Heart right ventricle (tissue), 16 donors: ENCODE measurements at regions of chr12 and their contacts with region 1.

Region 1: DNA sequence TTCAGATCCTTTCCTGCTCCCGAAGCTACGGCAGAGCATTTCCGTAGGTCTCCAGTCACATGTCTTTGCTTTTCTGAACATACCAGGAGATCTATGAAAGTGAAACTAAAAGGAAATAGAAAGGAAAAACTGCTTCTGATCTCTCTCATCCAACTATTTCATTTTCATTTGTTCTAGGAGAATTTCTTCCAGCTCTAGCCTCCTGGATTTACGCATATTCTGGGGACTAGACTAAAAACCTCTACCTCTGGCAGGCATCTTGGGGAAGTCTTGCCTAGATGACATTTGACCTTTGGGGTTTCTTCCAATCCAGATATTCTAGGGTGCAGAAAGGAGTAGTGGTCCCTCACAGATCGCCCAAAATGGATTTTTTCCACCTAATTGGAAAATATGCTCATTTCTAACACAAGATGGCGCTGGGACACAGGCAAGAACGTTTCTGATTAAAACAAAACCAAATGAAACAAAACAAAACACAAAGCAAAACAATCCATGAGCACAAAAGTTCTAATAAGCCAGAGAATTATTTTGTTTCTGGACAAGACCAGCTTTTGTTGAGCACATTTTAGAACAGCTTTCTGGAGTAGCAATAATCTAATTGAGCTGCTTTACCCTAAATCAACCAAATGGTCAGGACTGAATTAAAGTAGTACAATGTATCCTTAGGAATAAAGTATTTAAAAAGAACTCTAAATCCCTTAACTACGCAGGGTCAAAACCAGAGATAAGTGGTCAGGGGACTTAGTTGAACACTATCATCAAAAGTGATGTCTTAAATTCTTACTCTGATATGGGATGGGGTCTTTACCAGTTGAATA is 12.3 kb upstream of the PARP11 start:
- DNase-seq: peak in 1 of 2 donors; percentile 35
- ATAC-seq: peak in 6 of 8 donors; percentile 37 to 62 (median 52)
- H3K4me3 ChIP-seq: peak overlapping the region in 9 of 10 donors; percentile 20 to 49 (median 37)
- H3K27ac ChIP-seq: peak overlapping the region in 9 of 10 donors; percentile 39 to 81 (median 63)
- H3K4me1 ChIP-seq: peaks cover 0 to 13% (median 0%) of the 10 kb centered on the region in 9 donors
- H3K27me3 ChIP-seq: peaks cover 0 to 12% (median 10%) of the 10 kb centered on the region in 7 donors
- CTCF ChIP-seq: peak; percentile 69 to 86 (median 78)

Region 2: DNA sequence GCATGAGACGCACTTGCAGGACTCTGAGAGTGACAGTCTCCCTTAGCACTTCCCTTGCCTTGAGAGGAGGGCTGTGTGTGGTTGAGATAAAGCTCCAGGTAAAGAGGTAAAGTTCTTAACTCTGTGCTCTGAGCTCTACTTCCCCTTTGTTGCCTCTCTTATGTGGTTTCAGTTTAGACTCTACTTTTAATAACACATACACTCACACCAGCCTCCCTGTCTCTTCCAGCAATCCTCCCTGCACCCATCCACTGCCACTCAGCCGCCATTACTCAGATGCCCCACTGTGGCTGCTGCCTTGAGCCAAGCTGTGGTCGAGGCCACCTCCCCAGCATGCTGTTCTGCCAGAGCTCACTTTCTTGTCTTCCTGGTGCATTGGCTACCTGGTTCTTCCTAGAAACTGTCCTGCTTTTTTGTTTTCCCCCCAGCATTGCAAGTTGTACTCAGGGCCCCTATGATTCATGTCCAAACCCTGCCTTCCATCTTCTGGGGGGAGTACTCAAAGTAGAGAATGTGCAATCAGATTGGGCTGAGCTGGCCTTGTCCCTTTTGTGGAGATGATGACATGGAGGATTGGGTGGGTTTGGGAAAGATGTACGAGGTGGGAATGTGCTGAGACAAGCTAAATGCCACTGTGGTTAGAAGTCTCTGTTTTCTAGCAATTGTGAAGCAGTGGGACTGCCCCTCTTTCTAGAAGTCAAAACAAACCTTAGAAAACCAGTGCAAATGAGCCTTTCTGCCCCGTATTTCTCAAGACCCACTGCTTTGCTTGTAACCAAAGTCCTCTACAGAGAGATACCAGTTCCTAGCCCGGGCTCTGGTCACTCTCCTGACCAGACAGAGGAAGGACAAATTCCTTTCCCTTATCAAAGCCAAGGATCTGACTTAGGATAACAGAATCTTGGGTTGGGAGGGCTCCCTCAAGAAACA is 103.3 kb after region 1 on chr12:
- intact Hi-C with region 1: loop called in 2 of 10 experiments (anchors 10 kb)
- DNase-seq: no peak
- ATAC-seq: no peak
- H3K4me3 ChIP-seq: no peak overlapping the region
- H3K27ac ChIP-seq: peak overlapping the region in 1 of 10 donors; percentile 2
- H3K4me1 ChIP-seq: no peaks in the 10 kb centered on the region
- H3K27me3 ChIP-seq: peaks cover 0 to 36% (median 20%) of the 10 kb centered on the region in 7 donors
- CTCF ChIP-seq: no peak

Region 3: GRCh38 chr12:4030929-4031702 is 145.6 kb after region 1 on chr12:
- intact Hi-C with region 1: loop called in 6 of 10 experiments (anchors 2 to 10 kb)
- DNase-seq: peak; percentile 84
- ATAC-seq: peak; percentile 96 to 99 (median 98)
- H3K4me3 ChIP-seq: peak overlapping the region in 9 of 10 donors; percentile 38 to 71 (median 59)
- H3K27ac ChIP-seq: peak overlapping the region in 8 of 10 donors; percentile 22 to 82 (median 78)
- H3K4me1 ChIP-seq: peaks cover 0 to 24% (median 12%) of the 10 kb centered on the region in 9 donors
- H3K27me3 ChIP-seq: peaks cover 0 to 11% (median 0%) of the 10 kb centered on the region in 7 donors
- CTCF ChIP-seq: peak in 3 of 9 donors; percentile 8 to 34 (median 14)

Region 4: GRCh38 chr12:4044736-4045730 is 159.5 kb after region 1 on chr12:
- intact Hi-C with region 1: loop called in 1 of 10 experiments (anchors 10 kb)
- DNase-seq: peak in 1 of 2 donors; percentile 24
- ATAC-seq: peak in 3 of 8 donors; percentile 35 to 67 (median 55)
- H3K4me3 ChIP-seq: no peak overlapping the region
- H3K27ac ChIP-seq: no peak overlapping the region
- H3K4me1 ChIP-seq: no peaks in the 10 kb centered on the region
- H3K27me3 ChIP-seq: peaks cover 0 to 24% (median 15%) of the 10 kb centered on the region in 7 donors
- CTCF ChIP-seq: no peak

Region 5: GRCh38 chr12:4187916-4188315 is 302.4 kb after region 1 on chr12:
- intact Hi-C with region 1: no loop called
- DNase-seq: no peak
- ATAC-seq: no peak
- H3K4me3 ChIP-seq: no peak overlapping the region
- H3K27ac ChIP-seq: no peak overlapping the region
- H3K4me1 ChIP-seq: no peaks in the 10 kb centered on the region
- H3K27me3 ChIP-seq: peaks cover 0 to 10% (median 0%) of the 10 kb centered on the region in 7 donors
- CTCF ChIP-seq: no peak

Region 6: DNA sequence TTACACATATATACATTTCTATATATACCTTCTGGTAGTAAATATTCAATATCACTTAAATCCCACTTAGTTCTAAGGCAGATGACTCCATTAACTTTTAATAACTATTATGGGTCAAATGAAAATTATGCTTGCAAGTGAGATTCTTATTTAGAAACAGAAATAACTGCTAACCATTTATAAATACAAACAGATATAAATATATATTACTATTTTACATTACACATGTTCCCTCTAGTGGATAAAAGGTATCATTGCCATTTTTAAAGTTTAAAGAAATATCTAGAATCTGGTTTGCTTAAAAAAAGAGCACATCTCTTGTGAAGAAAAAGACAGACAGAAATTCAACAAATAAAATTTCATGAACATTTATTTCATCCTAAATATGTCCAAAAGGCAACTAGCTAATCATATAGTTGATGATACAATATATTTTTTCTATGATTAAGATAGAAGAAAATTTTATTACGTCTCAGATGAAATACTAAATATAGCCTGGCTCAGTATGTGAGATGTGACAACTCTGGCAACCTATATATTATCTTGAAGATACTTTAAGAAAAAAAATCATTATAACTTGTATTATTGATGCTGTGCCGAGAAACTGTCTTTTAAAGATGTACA is 641.5 kb after region 1 on chr12:
- intact Hi-C with region 1: loop called in 3 of 10 experiments (anchors 5 to 10 kb)
- DNase-seq: no peak
- ATAC-seq: no peak
- H3K4me3 ChIP-seq: no peak overlapping the region
- H3K27ac ChIP-seq: no peak overlapping the region
- H3K4me1 ChIP-seq: no peaks in the 10 kb centered on the region
- H3K27me3 ChIP-seq: no peaks in the 10 kb centered on the region
- CTCF ChIP-seq: peak; percentile 42 to 79 (median 68)